Activated CD4-positive, alpha-beta T cell treated with anti-CD3 and anti-CD28 coated beads, Interleukin-2, amount 10 ng/mL, durations not matched to agents 24 days and 14 days (primary cell): ENCODE measurements at regions of chr1 and their contacts with region 1.

Region 1: DNA sequence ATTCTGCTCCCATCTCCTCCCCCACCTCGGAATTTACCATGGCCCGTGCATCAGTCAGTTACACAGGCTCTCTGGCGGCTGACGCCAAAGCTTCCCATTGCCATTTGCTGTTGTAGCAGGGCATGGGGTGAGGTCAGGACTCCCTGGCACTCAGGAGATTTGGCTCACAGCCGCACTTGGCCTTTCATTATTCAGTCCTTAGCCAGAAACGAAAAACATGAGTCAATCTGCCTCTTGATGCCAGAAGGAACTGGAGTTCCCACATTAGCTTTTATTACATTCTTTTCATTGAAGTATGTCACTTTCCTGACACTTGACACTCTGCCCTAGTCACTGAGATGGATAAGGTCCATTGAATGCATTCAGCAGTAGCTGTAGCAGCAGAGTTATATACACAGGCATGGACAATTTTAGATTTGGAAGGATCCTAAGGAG is 260.6 kb downstream of the CACNA1E start:
- DNase-seq: no peak
- H3K4me3 Mint-ChIP-seq: no peak overlapping the region
- H3K27ac Mint-ChIP-seq: no peak overlapping the region
- H3K4me1 Mint-ChIP-seq: no peaks in the 10 kb centered on the region
- H3K27me3 Mint-ChIP-seq: peaks cover 5% of the 10 kb centered on the region

Region 2: GRCh38 chr1:182054698-182055326 is 310.9 kb after region 1 on chr1:
- intact Hi-C with region 1: loop called (anchors 10 kb)
- DNase-seq: peak; percentile 90
- H3K4me3 Mint-ChIP-seq: no peak overlapping the region
- H3K27ac Mint-ChIP-seq: no peak overlapping the region
- H3K4me1 Mint-ChIP-seq: peaks cover 23% of the 10 kb centered on the region
- H3K27me3 Mint-ChIP-seq: peaks cover 30% of the 10 kb centered on the region